PC-9 (cell line): ENCODE measurements at regions of chr22 and their contacts with region 1.

Region 1: DNA sequence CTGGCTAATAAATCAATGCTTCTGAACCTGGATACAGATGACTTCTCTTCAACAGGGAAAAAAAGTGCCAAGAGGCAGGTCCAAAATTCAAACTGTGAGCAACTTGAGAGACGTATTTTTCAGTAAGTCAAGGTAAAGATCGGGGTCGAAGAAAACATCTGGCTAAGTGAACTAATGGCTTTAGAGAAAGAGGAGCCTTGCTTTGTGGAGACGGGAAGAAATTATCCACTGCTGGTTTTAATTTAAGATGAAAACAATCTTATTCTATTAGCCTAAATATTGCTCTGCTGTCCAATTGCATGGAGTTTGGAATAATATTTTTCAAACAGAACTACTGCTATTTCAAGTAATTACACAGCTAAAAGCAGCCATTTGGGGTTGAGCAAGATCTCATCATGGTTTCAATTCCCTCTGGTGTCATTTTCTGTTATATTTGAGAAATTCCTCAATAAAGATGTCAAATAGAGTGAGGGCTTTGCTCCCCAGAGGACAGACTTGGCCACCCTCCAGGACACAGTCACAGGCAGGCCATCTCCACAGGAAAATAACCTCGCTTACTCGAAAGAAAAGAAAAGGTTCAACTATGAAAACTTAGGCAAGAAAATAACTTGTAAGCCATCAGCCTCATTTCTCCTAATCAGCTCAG is 29.8 kb downstream of the SCUBE1 start:
- DNase-seq: no peak
- H3K4me3 ChIP-seq: no peak overlapping the region
- H3K27ac ChIP-seq: no peak overlapping the region
- H3K4me1 ChIP-seq: no peaks in the 10 kb centered on the region
- H3K27me3 ChIP-seq: peaks cover 98% of the 10 kb centered on the region
- CTCF ChIP-seq: no peak

Region 2: DNA sequence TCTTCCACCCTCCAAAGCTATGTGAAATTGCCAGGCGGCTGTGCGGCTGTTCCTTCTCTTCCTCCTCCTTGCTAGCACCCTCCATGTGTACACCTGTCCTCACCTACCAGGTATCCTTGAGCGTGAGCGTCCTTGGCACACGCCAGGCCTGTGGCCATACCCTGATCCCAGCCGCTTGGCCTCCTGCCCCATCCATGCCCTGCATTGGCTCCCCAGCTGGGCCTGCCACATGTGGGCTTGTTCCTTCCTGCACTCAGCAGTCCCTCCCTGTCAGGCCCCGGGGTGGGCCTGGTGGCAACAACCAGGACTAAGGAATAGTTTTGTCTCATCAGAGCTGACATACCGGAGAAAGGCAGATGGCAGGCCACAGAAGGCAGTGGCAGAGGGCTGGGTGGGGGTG is 10.2 kb before region 1 on chr22:
- CTCF ChIA-PET with region 1: interaction called, 14 read pairs
- POLR2A ChIA-PET with region 1: no interaction called
- intact Hi-C with region 1: no loop called
- DNase-seq: no peak
- H3K4me3 ChIP-seq: no peak overlapping the region
- H3K27ac ChIP-seq: no peak overlapping the region
- H3K4me1 ChIP-seq: no peaks in the 10 kb centered on the region
- H3K27me3 ChIP-seq: peaks cover 98% of the 10 kb centered on the region
- CTCF ChIP-seq: no peak